ENCODE measurements at regions of chr4 and their contacts with region 1.

Region 1: DNA sequence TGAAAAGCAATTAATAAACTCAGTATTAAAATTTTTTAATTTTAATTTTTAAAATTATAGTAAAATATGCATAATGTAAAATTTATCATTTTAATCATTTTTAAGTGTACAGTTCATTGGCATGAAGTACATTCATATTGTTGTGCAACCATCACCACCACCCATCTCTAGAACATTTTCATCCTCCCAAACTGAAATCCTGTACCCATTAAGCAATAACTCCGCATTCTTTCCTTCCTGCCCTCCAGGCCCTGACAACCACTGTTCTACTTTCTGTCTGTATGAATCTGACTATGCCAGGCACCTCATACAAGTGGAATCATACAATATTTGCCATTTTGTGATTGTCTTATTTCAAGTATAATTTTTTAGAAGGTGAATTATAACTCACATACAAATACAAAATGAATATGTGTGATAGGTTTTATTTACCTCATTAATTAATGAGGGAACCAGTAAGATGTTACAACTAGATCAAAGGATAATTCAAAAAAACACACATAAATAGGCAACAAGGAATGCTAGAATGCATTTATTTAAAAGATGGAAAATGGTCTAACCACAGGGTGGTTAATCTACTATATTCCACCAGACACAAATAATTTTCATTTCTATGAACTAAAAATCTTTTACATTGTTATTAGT is 13.1 kb upstream of the AFF1 start:
- DNase-seq: no peak
- H3K4me3 Mint-ChIP-seq: no peak overlapping the region
- H3K27ac Mint-ChIP-seq: no peak overlapping the region
- H3K4me1 Mint-ChIP-seq: peaks cover 6% of the 10 kb centered on the region
- H3K27me3 Mint-ChIP-seq: no peaks in the 10 kb centered on the region

Region 2: GRCh38 chr4:86870442-86871069 is 51.2 kb before region 1 on chr4:
- CTCF ChIA-PET with region 1: no interaction called
- POLR2A ChIA-PET with region 1: no interaction called
- intact Hi-C with region 1: no loop called
- DNase-seq: no peak
- H3K4me3 Mint-ChIP-seq: no peak overlapping the region
- H3K27ac Mint-ChIP-seq: no peak overlapping the region
- H3K4me1 Mint-ChIP-seq: no peaks in the 10 kb centered on the region
- H3K27me3 Mint-ChIP-seq: no peaks in the 10 kb centered on the region

Region 3: GRCh38 chr4:86901866-86902265 is 19.9 kb before region 1 on chr4:
- CTCF ChIA-PET with region 1: interaction called, 12 read pairs
- POLR2A ChIA-PET with region 1: no interaction called
- intact Hi-C with region 1: no loop called
- DNase-seq: no peak
- H3K4me3 Mint-ChIP-seq: no peak overlapping the region
- H3K27ac Mint-ChIP-seq: no peak overlapping the region
- H3K4me1 Mint-ChIP-seq: no peaks in the 10 kb centered on the region
- H3K27me3 Mint-ChIP-seq: peaks cover 6% of the 10 kb centered on the region

Region 4: GRCh38 chr4:87093443-87094123 is 171.9 kb after region 1 on chr4:
- CTCF ChIA-PET with region 1: interaction called, 176 read pairs
- POLR2A ChIA-PET with region 1: interaction called, 3 read pairs
- intact Hi-C with region 1: loop called (anchors 1 kb)
- DNase-seq: peak; percentile 50
- H3K4me3 Mint-ChIP-seq: no peak overlapping the region
- H3K27ac Mint-ChIP-seq: peak overlapping the region; percentile 71
- H3K4me1 Mint-ChIP-seq: peaks cover 50% of the 10 kb centered on the region
- H3K27me3 Mint-ChIP-seq: no peaks in the 10 kb centered on the region

Region 5: DNA sequence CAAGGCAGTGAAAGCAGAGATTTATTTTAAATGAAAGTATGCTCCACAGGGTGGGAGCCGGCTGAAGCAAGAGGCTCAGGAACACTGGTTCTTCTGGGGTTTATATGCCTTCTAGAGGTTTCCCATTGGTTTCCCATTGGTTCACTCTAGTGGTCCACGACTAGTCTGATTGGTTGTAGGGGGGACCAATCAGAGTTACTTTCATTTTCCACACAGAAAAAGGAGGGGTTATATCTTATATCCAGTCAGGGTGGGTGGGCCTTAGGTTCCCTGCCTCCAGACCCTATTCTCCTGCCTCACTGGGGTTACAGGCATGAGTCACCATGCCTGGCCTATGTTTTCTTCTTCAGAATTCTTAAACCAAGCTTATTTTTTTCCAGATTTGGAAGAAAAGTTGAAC is 197.1 kb after region 1 on chr4:
- CTCF ChIA-PET with region 1: interaction called, 14 read pairs
- POLR2A ChIA-PET with region 1: no interaction called
- intact Hi-C with region 1: no loop called
- DNase-seq: no peak
- H3K4me3 Mint-ChIP-seq: no peak overlapping the region
- H3K27ac Mint-ChIP-seq: no peak overlapping the region
- H3K4me1 Mint-ChIP-seq: peaks cover 32% of the 10 kb centered on the region
- H3K27me3 Mint-ChIP-seq: no peaks in the 10 kb centered on the region

Region 6: DNA sequence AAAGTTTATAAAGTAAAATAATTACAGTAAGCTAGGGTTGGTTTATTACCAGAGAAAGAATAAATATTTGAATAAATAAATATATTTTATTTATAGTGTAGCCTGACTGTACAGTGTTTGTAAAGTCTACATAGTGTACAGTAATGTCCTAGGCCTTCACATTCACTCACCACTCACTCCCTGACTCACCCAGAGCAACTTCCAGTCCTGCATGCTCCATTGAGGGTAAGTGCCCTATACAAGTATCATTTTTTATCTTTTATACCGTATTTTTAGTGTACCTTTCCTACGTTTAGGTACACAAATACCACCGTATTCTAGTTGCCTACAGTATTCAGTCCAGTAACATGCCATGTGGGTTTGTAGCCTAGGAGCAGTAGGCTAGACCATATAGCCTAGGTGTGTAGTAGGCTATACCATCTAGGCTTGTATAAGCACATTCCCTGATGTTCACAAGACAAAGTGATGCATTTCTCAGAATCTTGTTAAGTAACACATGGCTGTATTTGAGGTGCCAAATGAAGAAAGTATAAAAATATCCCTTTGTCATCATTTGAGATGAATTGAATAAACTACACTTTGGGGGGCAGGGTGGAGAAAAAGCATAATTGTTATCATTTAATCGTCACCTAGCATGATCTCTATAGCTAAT is 313.4 kb after region 1 on chr4:
- CTCF ChIA-PET with region 1: interaction called, 26 read pairs
- POLR2A ChIA-PET with region 1: no interaction called
- intact Hi-C with region 1: loop called (anchors 1 kb)
- DNase-seq: no peak
- H3K4me3 Mint-ChIP-seq: peak overlapping the region; percentile 73
- H3K27ac Mint-ChIP-seq: no peak overlapping the region
- H3K4me1 Mint-ChIP-seq: no peaks in the 10 kb centered on the region
- H3K27me3 Mint-ChIP-seq: peaks cover 2% of the 10 kb centered on the region

Region 7: GRCh38 chr4:87353592-87353991 is 431.9 kb after region 1 on chr4:
- CTCF ChIA-PET with region 1: no interaction called
- POLR2A ChIA-PET with region 1: no interaction called
- intact Hi-C with region 1: no loop called
- DNase-seq: peak; percentile 37
- H3K4me3 Mint-ChIP-seq: no peak overlapping the region
- H3K27ac Mint-ChIP-seq: no peak overlapping the region
- H3K4me1 Mint-ChIP-seq: no peaks in the 10 kb centered on the region
- H3K27me3 Mint-ChIP-seq: no peaks in the 10 kb centered on the region

Measured in activated CD4-positive, alpha-beta memory T cell treated with anti-CD3 and anti-CD28 coated beads for 36 hours (primary cell).